PC-3 (cell line): ENCODE measurements at regions of chr2 and their contacts with region 1.

Region 1: DNA sequence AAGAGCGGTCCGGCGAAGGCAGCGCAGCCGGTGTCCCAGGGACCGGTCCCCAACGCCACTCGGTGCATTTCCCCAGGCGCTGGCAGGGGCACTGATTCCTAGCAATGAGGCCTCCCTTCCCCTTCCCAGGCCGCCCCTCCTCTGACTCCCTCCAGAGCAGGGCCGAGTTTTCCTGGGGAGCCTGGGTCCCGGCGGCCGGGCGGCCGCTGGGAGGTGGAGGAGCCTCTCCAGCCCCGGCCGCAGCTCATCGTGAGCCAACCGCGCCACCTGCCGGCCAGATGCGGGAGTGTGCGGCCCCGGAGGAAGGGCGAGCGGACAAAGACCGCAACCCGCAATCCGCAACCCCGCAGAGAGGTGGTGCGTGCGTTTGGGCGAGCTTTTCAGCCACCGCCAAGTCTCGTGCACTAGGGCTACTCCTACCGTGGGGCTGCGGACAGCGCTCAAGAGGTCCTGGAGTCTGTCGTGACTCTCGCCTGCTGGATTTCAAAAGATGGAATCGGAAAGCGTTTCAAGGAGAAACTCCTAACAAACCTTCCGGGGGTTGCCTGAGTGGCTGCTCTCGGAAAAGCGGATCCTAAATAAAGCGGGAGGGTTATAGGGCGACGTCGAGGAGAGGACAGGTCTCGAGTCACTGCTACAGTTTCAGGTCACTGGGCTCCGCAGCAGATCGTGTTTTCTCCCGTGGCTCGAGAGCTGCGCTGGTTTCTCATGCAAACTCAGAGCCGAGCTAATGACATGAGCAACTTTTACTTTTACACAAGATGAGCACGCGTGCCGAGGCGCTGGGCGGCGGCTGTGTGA is 1.5 kb upstream of the EPHA4 start:
- DNase-seq: peak; percentile 76
- ATAC-seq: peak; percentile 70
- H3K4me3 ChIP-seq: peak overlapping the region; percentile 96
- H3K27ac ChIP-seq: no peak overlapping the region
- H3K4me1 ChIP-seq: peaks cover 11% of the 10 kb centered on the region; the same call in 1 of the 2 replicates
- H3K27me3 ChIP-seq: peaks cover 32% of the 10 kb centered on the region
- CTCF ChIP-seq: peak; percentile 88

Region 2: GRCh38 chr2:220277445-220278007 is 1296.1 kb before region 1 on chr2:
- CTCF ChIA-PET with region 1: no interaction called
- POLR2A ChIA-PET with region 1: no interaction called
- intact Hi-C with region 1: loop called (anchors 5 kb)
- DNase-seq: peak; percentile 97
- ATAC-seq: peak; percentile 67
- H3K4me3 ChIP-seq: no peak overlapping the region
- H3K27ac ChIP-seq: peak overlapping the region; percentile 96
- H3K4me1 ChIP-seq: peaks cover 94% of the 10 kb centered on the region
- H3K27me3 ChIP-seq: no peaks in the 10 kb centered on the region
- CTCF ChIP-seq: no peak

Region 3: GRCh38 chr2:220504938-220505503 is 1068.6 kb before region 1 on chr2:
- CTCF ChIA-PET with region 1: no interaction called
- POLR2A ChIA-PET with region 1: no interaction called
- intact Hi-C with region 1: loop called (anchors 10 kb)
- DNase-seq: peak; percentile 86
- ATAC-seq: peak; percentile 85
- H3K4me3 ChIP-seq: no peak overlapping the region
- H3K27ac ChIP-seq: peak overlapping the region; percentile 68
- H3K4me1 ChIP-seq: peaks cover 50% of the 10 kb centered on the region
- H3K27me3 ChIP-seq: no peaks in the 10 kb centered on the region
- CTCF ChIP-seq: no peak

Region 4: GRCh38 chr2:220779931-220780330 is 793.7 kb before region 1 on chr2:
- CTCF ChIA-PET with region 1: no interaction called
- POLR2A ChIA-PET with region 1: no interaction called
- intact Hi-C with region 1: loop called (anchors 10 kb)
- DNase-seq: peak; percentile 87
- ATAC-seq: peak; percentile 50
- H3K4me3 ChIP-seq: peak overlapping the region; percentile 4; the same call in 1 of the 2 replicates
- H3K27ac ChIP-seq: 0 out of 2 replicates have a peak overlapping the region, but pooled peaks have one; percentile 2
- H3K4me1 ChIP-seq: peaks cover 24% of the 10 kb centered on the region
- H3K27me3 ChIP-seq: no peaks in the 10 kb centered on the region
- CTCF ChIP-seq: no peak

Region 5: DNA sequence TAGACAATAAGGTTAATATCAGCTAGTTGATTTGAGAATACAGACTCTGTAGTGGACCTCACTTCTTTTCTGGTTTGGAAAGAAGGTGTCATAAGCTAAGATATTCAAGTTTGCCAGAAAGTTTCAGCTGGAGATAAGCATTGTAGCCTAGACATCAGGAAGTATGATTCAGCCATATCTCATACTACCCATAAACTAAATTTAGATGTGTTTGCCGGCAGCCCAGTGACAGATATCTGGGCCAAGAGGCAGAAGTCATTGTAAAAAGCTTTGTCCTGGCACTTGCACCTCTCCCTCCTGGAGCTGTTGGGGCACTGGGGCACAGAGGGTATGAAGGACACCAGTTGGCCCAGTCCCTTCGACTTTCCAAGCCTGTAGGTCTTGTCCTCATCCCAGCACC is 129.5 kb before region 1 on chr2:
- CTCF ChIA-PET with region 1: interaction called, 3 read pairs
- POLR2A ChIA-PET with region 1: no interaction called
- intact Hi-C with region 1: loop called (anchors 5 kb)
- DNase-seq: peak; percentile 77
- ATAC-seq: peak; percentile 93
- H3K4me3 ChIP-seq: no peak overlapping the region
- H3K27ac ChIP-seq: peak overlapping the region; percentile 52
- H3K4me1 ChIP-seq: peaks cover 31% of the 10 kb centered on the region
- H3K27me3 ChIP-seq: no peaks in the 10 kb centered on the region
- CTCF ChIP-seq: no peak

Region 6: DNA sequence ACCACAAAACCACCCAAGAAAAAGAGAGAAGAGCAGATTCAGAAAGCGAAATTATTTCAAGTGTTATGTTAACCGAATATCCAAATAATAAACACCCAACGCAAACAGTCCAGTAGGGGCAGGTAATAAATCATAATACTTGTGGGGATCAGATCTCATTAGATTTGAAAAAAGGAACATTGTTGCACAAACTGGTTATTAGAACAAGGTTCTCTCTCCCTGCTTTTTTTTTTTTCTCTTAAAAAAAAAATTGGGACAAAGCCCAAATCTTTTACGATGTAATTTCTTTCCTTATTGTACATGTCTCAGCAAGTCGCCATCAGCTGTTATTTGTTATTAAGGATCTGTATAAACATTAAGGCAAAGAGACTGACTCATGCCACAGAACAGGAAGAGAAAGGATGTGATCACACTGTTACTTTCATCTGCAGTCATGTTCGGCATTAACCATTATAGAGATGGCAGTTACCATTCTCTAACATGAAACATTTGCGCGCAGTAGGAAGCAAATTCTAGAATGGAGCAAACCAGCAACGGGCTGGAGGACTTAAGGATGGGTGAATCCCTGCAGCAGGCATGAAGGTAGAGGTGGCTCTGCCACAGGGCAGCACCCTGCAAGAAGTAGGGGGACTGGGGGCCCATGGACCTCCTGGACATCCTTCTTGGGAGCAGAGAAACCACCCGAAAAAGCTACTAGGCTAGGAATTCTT is 43.5 kb before region 1 on chr2:
- CTCF ChIA-PET with region 1: no interaction called
- POLR2A ChIA-PET with region 1: no interaction called
- intact Hi-C with region 1: loop called (anchors 1 kb)
- DNase-seq: peak; percentile 82
- ATAC-seq: peak; percentile 93
- H3K4me3 ChIP-seq: peak overlapping the region; percentile 46
- H3K27ac ChIP-seq: 0 out of 2 replicates have a peak overlapping the region, but pooled peaks have one; percentile 26
- H3K4me1 ChIP-seq: peaks cover 18% of the 10 kb centered on the region
- H3K27me3 ChIP-seq: no peaks in the 10 kb centered on the region
- CTCF ChIP-seq: no peak

Region 7: GRCh38 chr2:221541131-221541735 is 32.4 kb before region 1 on chr2:
- CTCF ChIA-PET with region 1: no interaction called
- POLR2A ChIA-PET with region 1: no interaction called
- intact Hi-C with region 1: no loop called
- DNase-seq: no peak
- ATAC-seq: no peak
- H3K4me3 ChIP-seq: no peak overlapping the region
- H3K27ac ChIP-seq: no peak overlapping the region
- H3K4me1 ChIP-seq: 0 out of 2 replicates have a peak, but pooled peaks cover 3% of the 10 kb centered on the region
- H3K27me3 ChIP-seq: no peaks in the 10 kb centered on the region
- CTCF ChIP-seq: no peak

Region 8: GRCh38 chr2:221969087-221969829 is 395.6 kb after region 1 on chr2:
- CTCF ChIA-PET with region 1: no interaction called
- POLR2A ChIA-PET with region 1: no interaction called
- intact Hi-C with region 1: loop called (anchors 1 kb)
- DNase-seq: peak; percentile 63
- ATAC-seq: peak; percentile 84
- H3K4me3 ChIP-seq: no peak overlapping the region
- H3K27ac ChIP-seq: no peak overlapping the region
- H3K4me1 ChIP-seq: no peaks in the 10 kb centered on the region
- H3K27me3 ChIP-seq: 0 out of 2 replicates have a peak, but pooled peaks cover 2% of the 10 kb centered on the region
- CTCF ChIP-seq: peak; percentile 77